ENCODE measurements at regions of chr6 and their contacts with region 1.

Region 1: GRCh38 chr6:42532038-42532669 is 31.7 kb upstream of the UBR2 start:
- DNase-seq: peak; percentile 43
- ATAC-seq: peak; percentile 63
- H3K4me3 Mint-ChIP-seq: no peak overlapping the region
- H3K27ac Mint-ChIP-seq: no peak overlapping the region
- H3K4me1 Mint-ChIP-seq: no peaks in the 10 kb centered on the region
- H3K27me3 Mint-ChIP-seq: peaks cover 6% of the 10 kb centered on the region

Region 2: GRCh38 chr6:42260972-42261371 is 271.2 kb before region 1 on chr6:
- CTCF ChIA-PET with region 1: interaction called, 17 read pairs
- POLR2A ChIA-PET with region 1: no interaction called
- DNase-seq: peak; percentile 43
- ATAC-seq: peak; percentile 75
- H3K4me3 Mint-ChIP-seq: no peak overlapping the region
- H3K27ac Mint-ChIP-seq: peak overlapping the region; percentile 55
- H3K4me1 Mint-ChIP-seq: peaks cover 11% of the 10 kb centered on the region
- H3K27me3 Mint-ChIP-seq: no peaks in the 10 kb centered on the region

Region 3: DNA sequence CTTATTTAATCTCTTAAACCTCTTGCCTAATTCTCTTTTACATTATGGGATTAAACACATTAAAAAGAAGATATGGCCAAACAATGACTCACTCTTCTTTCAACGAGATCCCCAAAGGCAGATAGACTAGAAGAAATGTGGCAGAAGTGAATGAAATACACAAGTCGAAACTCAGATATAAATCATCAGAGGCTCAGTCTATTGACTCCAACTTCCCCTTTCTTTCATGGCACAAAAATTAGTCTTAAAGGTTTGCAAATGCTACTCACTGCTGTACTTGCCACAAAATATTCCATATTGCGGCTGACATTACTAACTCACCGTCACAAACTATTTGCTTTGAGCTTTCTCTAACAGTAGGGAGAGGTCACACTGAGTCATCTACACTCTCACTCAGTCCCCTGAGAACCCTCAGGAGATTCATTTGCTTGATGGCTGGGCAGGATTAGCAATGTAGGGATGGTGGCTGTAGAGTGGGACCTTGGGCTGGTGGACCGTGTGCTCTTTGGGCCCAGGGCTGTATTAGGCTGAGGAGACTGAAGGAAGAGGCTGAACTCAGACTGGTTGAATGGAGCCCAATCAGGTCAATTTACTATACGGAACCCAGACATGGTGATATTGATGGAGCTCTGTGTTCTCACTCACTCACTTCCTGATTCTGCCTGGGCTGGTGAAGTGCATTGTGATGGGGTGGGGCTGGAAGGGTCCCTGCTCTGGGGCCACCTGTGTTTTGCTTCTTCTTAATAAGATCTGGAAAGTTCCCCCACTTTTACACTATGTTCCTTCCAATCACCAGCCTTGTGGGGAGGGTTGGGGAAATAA is 11.2 kb before region 1 on chr6:
- CTCF ChIA-PET with region 1: interaction called, 10 read pairs
- POLR2A ChIA-PET with region 1: no interaction called
- DNase-seq: no peak
- ATAC-seq: no peak
- H3K4me3 Mint-ChIP-seq: no peak overlapping the region
- H3K27ac Mint-ChIP-seq: no peak overlapping the region
- H3K4me1 Mint-ChIP-seq: no peaks in the 10 kb centered on the region
- H3K27me3 Mint-ChIP-seq: no peaks in the 10 kb centered on the region

Measured in activated CD8-positive, alpha-beta T cell treated with anti-CD3 and anti-CD28 coated beads, Interleukin-2, amount 10 ng/mL, durations not matched to agents 7 days and 5 days (primary cell).